Esophagus muscularis mucosa (tissue), 4 donors: ENCODE measurements at regions of chr5 and their contacts with region 1.

Region 1: DNA sequence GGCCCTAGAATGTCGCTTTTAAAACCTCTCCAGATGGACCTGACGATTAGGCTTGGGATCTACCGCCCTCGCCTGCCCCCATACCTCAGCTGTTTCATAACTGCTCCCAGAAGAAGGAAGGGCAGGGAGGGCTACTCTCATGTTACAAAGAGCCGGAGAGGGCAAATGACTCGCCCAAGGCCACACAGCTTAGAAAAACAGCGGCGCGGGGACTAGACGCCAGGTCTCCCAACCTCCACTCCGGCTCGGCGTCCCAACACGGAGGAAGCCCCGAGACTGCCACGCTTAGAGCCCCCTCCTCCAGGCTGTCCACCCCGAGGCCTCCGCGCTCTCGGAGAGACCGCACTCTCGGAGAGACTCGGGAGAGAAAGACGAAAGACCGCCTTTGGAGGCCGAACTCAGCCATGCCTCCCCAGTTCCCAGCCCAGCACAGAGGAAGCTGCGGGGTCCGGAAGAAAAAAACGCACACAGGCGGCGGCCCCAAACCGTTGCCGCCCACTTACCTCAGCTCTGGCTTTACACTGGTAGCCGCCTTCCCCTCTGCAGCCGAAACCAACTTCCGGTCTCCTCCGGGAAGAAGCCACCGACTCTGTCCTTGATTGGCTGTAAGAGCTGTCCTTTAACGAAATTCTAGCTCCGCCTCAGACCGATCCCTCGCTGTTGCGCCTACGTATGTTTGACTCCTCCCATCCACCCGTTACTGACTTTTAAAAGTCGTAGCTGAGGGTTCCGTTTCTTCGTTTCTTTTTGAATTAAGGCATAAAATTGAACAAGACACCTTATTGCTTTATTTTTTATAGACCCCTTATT is at the start of gene MED7:
- DNase-seq: peak; percentile 98
- H3K4me3 ChIP-seq: peak within 1 kb of the TSS; percentile 85 to 96 (median 89)
- H3K27ac ChIP-seq: peak within 1 kb of the TSS; percentile 88 to 94 (median 92)
- H3K4me1 ChIP-seq: peaks cover 13 to 21% (median 17%) of the 10 kb centered on the region in 4 donors
- H3K27me3 ChIP-seq: no peaks in the 10 kb centered on the region
- CTCF ChIP-seq: no peak
- EP300 ChIP-seq: no peak
- POLR2A ChIP-seq: no peak
- total RNA-seq, gene MED7: 8.4 to 12.5 (median 10.4) TPM

Region 2: DNA sequence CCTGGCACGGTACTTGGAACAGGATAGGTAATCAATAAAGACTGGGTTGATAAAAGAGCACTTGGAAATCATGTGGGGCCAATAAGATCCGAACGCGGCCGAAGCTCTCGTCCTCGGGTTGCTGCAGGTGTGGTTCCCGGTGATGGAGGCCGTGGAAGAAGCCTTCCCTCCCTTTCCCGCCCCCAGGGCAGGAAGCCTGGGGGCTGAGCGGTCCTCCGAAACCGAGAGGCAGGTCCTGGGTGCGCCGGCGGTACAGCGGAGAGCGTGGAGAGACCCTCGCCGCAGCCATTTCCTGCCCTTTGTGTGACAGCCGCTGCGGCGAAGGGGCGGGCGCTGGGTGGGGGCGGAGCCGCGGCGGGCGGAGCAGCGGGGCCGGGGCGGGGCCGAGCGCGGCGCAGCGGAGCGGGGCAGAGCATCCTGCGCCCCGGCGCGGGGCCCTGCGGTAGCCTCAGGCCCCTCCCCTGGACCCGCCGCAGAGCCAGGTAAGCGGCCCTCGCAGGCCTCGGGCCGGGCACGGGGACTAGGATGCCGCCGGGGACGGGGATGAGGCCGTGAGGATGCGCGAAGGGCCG is 123.3 kb after region 1 on chr5 and contains the start of gene CYFIP2:
- intact Hi-C with region 1: loop called (anchors 10 kb)
- DNase-seq: peak; percentile 91
- H3K4me3 ChIP-seq: peak within 1 kb of the TSS; percentile 65 to 97 (median 83)
- H3K27ac ChIP-seq: peak within 1 kb of the TSS in 1 of 4 donors; percentile 36
- H3K4me1 ChIP-seq: peaks cover 14 to 21% (median 16%) of the 10 kb centered on the region in 4 donors
- H3K27me3 ChIP-seq: peaks cover 0 to 6% (median 0%) of the 10 kb centered on the region in 4 donors
- CTCF ChIP-seq: no peak
- EP300 ChIP-seq: no peak
- POLR2A ChIP-seq: no peak
- total RNA-seq, gene CYFIP2: 12.6 to 24.9 (median 14.6) TPM